A673 (cell line): ENCODE measurements at regions of chr7 and their contacts with region 1.

Region 1: DNA sequence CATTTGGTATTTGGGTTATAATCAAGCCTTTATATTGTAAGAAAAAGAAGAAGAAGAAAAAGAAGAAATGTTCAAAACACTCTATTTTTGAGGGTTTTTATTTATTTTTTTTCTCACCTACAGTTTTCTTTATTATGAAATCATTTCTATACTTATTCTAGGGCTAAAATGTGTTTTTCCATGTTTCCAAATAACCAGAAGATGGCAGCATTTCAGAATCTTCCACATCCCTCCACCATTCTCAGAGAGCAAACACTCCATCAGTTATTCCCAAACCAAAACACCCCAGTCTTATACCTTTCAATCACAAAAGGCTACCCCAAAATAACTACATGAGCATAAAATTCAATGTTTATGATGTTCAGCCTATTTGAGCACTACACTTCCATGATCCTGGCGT is 38.7 kb upstream of the PPP1R17 start:
- DNase-seq: peak; percentile 35
- H3K4me3 ChIP-seq: no peak overlapping the region
- H3K27ac ChIP-seq: no peak overlapping the region
- H3K4me1 ChIP-seq: no peaks in the 10 kb centered on the region
- H3K27me3 ChIP-seq: no peaks in the 10 kb centered on the region
- CTCF ChIP-seq: peak; percentile 46

Region 2: DNA sequence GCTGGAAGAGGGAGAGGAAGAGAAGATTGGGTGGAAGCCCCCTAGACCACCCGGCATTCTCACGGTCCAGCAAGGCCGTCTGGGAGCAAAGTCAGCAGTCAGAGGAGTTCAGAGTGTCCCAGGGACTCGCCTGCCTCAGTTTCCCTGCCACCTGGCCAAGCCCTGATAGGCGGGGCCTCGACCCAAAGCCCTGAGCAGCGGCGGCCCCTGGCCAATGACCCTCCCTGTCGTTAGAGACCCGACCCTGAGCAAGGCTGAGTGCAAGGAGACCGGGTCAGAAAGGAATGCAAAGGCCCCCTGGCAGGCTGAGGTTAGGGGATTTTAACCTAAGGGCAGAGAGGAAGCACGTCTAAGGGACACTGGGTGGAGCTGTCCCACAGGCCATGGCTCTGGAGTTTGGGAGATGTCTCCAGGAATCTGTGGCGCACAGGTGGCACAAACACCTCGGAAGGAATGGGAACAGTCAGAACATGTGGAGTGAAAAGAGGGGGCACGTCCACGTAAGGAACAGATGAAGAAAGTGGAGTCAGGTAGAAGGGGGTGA is 618.7 kb after region 1 on chr7:
- CTCF ChIA-PET with region 1: no interaction called
- POLR2A ChIA-PET with region 1: interaction called, 10 read pairs
- intact Hi-C with region 1: no loop called
- DNase-seq: no peak
- H3K4me3 ChIP-seq: no peak overlapping the region
- H3K27ac ChIP-seq: no peak overlapping the region
- H3K4me1 ChIP-seq: no peaks in the 10 kb centered on the region
- H3K27me3 ChIP-seq: peaks cover 7% of the 10 kb centered on the region
- CTCF ChIP-seq: no peak